Thyroid gland (tissue), 4 donors: ENCODE measurements at regions of chr1 and their contacts with region 1.

Region 1: GRCh38 chr1:230772457-230773395 is 25.5 kb downstream of the CAPN9 start:
- DNase-seq: peak; percentile 45 to 59
- H3K4me3 ChIP-seq: no peak overlapping the region
- H3K27ac ChIP-seq: no peak overlapping the region
- H3K4me1 ChIP-seq: peaks cover 4% of the 10 kb centered on the region in 2 donors
- H3K27me3 ChIP-seq: no peaks in the 10 kb centered on the region
- CTCF ChIP-seq: peak in 5 of 6 experiments; percentile 34 to 80 (median 59)
- POLR2A ChIP-seq: no peak

Region 2: GRCh38 chr1:230642263-230642959 is 130.3 kb before region 1 on chr1 and contains the start of gene COG2:
- intact Hi-C with region 1: loop called (anchors 5 kb)
- DNase-seq: peak; percentile 96
- H3K4me3 ChIP-seq: peak within 1 kb of the TSS; percentile 65 to 93 (median 81)
- H3K27ac ChIP-seq: peak within 1 kb of the TSS; percentile 28 to 62 (median 31)
- H3K4me1 ChIP-seq: peaks cover 19 to 23% of the 10 kb centered on the region in 2 donors
- H3K27me3 ChIP-seq: no peaks in the 10 kb centered on the region
- CTCF ChIP-seq: peak; percentile 84 to 100 (median 100)
- POLR2A ChIP-seq: peak in 1 of 2 donors; percentile 77
- total RNA-seq, gene COG2: 36.3 to 48.1 (median 37.5) TPM

Region 3: GRCh38 chr1:231116738-231117137 is 344.0 kb after region 1 on chr1:
- intact Hi-C with region 1: no loop called
- DNase-seq: no peak
- H3K4me3 ChIP-seq: no peak overlapping the region
- H3K27ac ChIP-seq: no peak overlapping the region
- H3K4me1 ChIP-seq: no peaks in the 10 kb centered on the region
- H3K27me3 ChIP-seq: no peaks in the 10 kb centered on the region
- CTCF ChIP-seq: no peak
- POLR2A ChIP-seq: no peak